Motor neuron (in vitro differentiated cells): ENCODE measurements at regions of chr4 and their contacts with region 1.

Region 1: DNA sequence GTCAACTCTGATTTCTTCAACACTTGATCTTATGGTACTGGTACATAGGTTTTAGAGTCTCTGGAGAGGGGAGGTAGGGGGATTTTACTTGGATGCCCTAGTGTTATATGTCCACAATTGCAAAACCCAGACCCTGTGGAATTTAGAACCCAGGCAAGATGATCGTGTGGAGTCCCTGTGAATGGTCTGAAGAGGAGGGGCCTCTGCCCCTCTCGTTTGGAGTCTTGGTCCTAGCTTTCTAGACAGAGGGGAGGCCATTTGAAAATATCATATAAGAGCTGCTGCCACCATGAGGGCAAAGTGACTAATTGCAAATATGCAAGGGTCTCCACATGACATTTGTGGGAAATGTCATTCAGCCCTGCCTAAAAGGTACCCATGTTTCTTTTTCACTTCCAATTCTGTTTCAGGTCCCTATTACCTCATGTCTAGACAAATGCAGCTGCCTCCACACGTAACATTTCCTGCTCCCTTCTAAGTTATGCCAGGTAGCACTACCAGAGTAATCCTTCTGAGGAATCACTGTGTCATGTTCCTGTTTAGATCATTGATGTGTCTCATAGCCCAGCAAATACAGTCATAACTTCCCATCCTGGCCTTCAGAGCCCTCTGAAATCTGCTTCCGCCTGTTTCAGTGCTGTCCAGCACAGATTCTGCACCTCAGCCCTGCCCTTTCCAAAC is 126.8 kb downstream of the KLHL8 start:
- ATAC-seq: peak; percentile 42 to 83 (median 74)
- H3K4me3 ChIP-seq: no peak overlapping the region
- H3K27ac ChIP-seq: no peak overlapping the region
- H3K4me1 ChIP-seq: peaks cover 0 to 8% of the 10 kb centered on the region in 2 donors

Region 2: GRCh38 chr4:86497980-86498862 is 595.4 kb before region 1 on chr4:
- in situ Hi-C with region 1: loop called in 1 of 9 experiments (anchors 25 kb)
- ATAC-seq: peak; percentile 79 to 95 (median 86)
- H3K4me3 ChIP-seq: no peak overlapping the region
- H3K27ac ChIP-seq: no peak overlapping the region
- H3K4me1 ChIP-seq: no peaks in the 10 kb centered on the region

Region 3: GRCh38 chr4:86927843-86928395 is 165.7 kb before region 1 on chr4:
- in situ Hi-C with region 1: loop called in 7 of 9 experiments (anchors 10 to 25 kb)
- ATAC-seq: peak in 2 of 8 experiments; percentile 82 to 87
- H3K4me3 ChIP-seq: no peak overlapping the region
- H3K27ac ChIP-seq: no peak overlapping the region
- H3K4me1 ChIP-seq: no peaks in the 10 kb centered on the region

Region 4: DNA sequence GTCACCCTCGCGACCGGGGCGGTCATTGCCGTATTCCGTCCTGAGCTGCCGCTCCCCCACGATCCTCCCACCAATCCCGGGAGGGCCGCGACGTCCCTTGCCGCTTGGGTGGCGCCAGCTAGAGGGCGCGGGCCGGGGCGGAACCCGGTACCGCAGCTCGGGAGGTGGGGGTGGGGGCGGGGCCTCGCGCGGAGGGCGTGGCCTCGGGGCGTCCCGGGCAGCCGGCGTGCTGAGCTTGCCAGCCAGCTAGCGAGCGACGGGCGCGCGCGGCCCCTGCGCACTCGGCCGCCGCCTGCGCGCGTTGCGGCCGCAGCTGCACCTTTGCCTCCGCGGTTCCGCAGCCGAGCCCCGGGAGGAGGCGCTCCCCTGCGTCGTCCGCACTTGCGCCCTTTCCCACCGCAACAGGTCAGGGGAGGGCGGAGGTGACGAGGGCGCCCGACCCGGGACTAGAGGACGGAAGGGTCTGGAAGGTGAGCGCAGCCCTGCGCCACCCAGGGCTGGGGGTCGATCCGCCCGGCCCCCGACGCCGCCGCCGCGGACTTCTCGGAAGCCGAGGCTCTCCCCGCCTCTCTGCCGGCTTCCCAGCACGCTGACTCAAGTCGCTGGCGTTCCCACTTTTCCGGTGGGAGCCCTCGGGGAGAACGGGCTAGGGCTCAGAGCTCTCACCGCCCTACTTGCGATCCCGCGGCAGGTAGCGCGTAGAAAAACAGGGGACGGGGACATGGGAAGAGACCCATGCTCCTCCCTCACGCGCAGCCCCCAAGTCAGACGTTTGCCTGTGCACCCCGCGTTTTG is 158.6 kb before region 1 on chr4 and contains the start of gene AFF1:
- in situ Hi-C with region 1: loop called in 6 of 9 experiments (anchors 25 kb)
- ATAC-seq: peak; percentile 70 to 91 (median 88)
- H3K4me3 ChIP-seq: peak within 1 kb of the TSS; percentile 47 to 78 (median 64)
- H3K27ac ChIP-seq: peak within 1 kb of the TSS; percentile 18 to 35
- H3K4me1 ChIP-seq: no peaks in the 10 kb centered on the region
- total RNA-seq, gene AFF1: 7.7 to 47.0 (median 15.8) TPM